Sciatic nerve (tissue), 2 donors: ENCODE measurements at regions of chr17 and their contacts with region 1.

Region 1: DNA sequence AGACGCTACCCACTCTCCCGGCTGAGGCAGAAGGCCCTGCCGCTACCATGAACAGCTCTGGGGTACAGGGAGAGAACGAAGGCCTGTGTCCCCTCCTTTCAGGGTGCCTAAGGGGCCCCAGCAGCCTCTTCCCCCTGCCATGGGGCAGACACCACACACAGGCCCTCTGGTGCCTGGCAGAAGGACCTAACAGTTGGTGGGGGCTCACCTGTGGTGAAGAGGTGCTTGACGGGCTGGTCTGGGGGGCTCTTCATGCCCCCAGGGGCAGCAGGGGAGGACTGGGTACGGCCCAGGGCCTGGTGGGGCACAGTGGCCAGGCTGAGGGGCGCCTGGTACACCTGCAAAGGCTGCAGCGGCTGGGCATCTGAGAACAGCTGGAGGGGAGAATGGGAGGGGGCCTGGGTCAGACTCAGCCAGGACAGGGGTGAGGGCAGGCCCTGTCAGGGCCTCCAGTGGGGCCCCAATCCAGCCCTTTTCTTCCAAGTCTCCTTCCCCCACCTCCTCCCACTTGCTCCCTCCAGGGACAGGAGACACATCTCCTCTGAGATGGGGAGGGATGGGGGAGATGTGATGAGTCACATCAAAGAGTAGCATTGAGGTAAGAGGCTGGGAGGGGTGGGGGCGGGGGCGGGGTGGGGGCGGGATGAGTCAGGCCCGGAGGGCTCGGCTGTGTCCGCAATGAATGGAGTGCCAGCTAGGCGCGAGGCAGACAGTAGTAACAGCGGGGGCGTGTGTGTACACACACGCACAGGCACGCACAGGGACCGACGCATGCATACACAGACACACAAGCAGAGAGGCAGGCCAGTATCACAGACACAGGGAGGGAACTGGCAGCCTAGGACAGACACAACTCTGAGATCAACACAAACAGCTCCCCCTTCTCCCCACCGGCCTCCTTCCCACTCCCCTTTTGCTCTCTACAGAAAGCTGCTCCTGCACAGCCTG is 16.1 kb downstream of the G6PC3 start:
- DNase-seq: no peak
- ATAC-seq: peak; percentile 45

Region 2: GRCh38 chr17:42309986-42310786 is 1776.5 kb before region 1 on chr17:
- intact Hi-C with region 1: loop called (anchors 5 kb)
- DNase-seq: no peak
- ATAC-seq: no peak